ENCODE measurements at regions of chr12 and their contacts with region 1.

Region 1: GRCh38 chr12:125240717-125241116 is 175.5 kb downstream of the AACS start:
- H3K4me3 ChIP-seq: no peak overlapping the region
- H3K27ac ChIP-seq: no peak overlapping the region
- H3K4me1 ChIP-seq: no peaks in the 10 kb centered on the region
- CTCF ChIP-seq: no peak

Region 2: GRCh38 chr12:125220404-125220803 is 20.3 kb before region 1 on chr12:
- CTCF ChIA-PET with region 1: interaction called, 16 read pairs
- POLR2A ChIA-PET with region 1: no interaction called
- H3K4me3 ChIP-seq: no peak overlapping the region
- H3K27ac ChIP-seq: no peak overlapping the region
- H3K4me1 ChIP-seq: 0 out of 2 replicates have a peak, but pooled peaks cover 7% of the 10 kb centered on the region
- CTCF ChIP-seq: no peak

Region 3: GRCh38 chr12:125225641-125226040 is 15.1 kb before region 1 on chr12:
- CTCF ChIA-PET with region 1: interaction called, 16 read pairs
- POLR2A ChIA-PET with region 1: no interaction called
- H3K4me3 ChIP-seq: no peak overlapping the region
- H3K27ac ChIP-seq: no peak overlapping the region
- H3K4me1 ChIP-seq: peaks cover 3% of the 10 kb centered on the region; the same call in 1 of the 2 replicates
- CTCF ChIP-seq: no peak

Region 4: DNA sequence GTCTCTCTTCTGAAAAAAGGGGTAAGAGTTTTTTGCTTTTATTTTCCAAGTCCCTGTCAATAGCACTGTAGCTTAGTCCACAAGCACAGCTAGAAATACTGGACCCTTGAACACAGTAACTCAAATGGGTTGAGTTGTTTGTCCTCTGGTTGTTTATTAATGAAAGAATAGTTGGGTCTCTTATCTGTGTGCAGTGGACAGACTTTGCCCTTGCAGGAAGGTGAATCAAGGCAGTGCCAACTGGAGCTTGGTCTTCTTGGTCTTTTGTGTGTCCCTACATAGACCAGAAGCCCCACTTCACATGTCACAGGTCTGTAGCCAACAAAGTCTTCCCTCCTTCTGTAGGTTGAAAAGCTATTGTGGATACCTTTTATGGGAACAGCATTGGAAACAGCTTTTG is 146.5 kb after region 1 on chr12:
- CTCF ChIA-PET with region 1: no interaction called
- POLR2A ChIA-PET with region 1: no interaction called
- H3K4me3 ChIP-seq: no peak overlapping the region
- H3K27ac ChIP-seq: no peak overlapping the region
- H3K4me1 ChIP-seq: no peaks in the 10 kb centered on the region
- CTCF ChIP-seq: no peak